Dorsolateral prefrontal cortex (tissue), 120 donors: ENCODE measurements at regions of chr4 and their contacts with region 1.

Region 1: GRCh38 chr4:53558065-53558801 is 33.1 kb downstream of the LNX1 start:
- DNase-seq: peak; percentile 31 to 90 (median 83)
- H3K4me3 ChIP-seq: peak overlapping the region in 58 of 59 donors; percentile 27 to 73 (median 54)
- H3K27ac ChIP-seq: peak overlapping the region in 52 of 59 donors; percentile 7 to 87 (median 74)
- H3K27me3 ChIP-seq: no peaks in the 10 kb centered on the region
- CTCF ChIP-seq: no peak

Region 2: GRCh38 chr4:52915730-52916300 is 642.4 kb before region 1 on chr4:
- intact Hi-C with region 1: no loop called
- DNase-seq: no peak
- H3K4me3 ChIP-seq: no peak overlapping the region
- H3K27ac ChIP-seq: peak overlapping the region in 1 of 59 donors; percentile 32
- H3K27me3 ChIP-seq: no peaks in the 10 kb centered on the region
- CTCF ChIP-seq: no peak

Region 3: DNA sequence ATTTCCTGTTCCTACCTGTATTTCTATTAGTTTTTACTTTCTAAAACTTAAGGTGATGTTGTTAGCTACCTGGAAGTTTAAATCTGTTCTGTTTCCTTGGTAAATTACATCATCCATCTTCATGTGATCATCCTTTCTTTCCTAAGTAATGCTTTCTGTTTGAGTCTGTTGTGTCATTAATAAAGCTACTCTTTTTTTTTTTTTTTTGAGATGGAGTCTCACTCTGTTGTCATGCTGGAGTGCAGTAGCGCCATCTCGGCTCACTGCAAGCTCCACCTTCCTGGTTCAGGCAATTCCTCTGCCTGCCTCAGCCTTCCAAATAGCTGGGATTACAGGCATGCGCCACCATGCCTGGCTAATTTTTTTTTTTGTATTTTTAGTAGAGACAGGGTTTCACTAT is 107.5 kb before region 1 on chr4:
- intact Hi-C with region 1: no loop called
- DNase-seq: no peak
- H3K4me3 ChIP-seq: no peak overlapping the region
- H3K27ac ChIP-seq: no peak overlapping the region
- H3K27me3 ChIP-seq: no peaks in the 10 kb centered on the region
- CTCF ChIP-seq: no peak

Region 4: DNA sequence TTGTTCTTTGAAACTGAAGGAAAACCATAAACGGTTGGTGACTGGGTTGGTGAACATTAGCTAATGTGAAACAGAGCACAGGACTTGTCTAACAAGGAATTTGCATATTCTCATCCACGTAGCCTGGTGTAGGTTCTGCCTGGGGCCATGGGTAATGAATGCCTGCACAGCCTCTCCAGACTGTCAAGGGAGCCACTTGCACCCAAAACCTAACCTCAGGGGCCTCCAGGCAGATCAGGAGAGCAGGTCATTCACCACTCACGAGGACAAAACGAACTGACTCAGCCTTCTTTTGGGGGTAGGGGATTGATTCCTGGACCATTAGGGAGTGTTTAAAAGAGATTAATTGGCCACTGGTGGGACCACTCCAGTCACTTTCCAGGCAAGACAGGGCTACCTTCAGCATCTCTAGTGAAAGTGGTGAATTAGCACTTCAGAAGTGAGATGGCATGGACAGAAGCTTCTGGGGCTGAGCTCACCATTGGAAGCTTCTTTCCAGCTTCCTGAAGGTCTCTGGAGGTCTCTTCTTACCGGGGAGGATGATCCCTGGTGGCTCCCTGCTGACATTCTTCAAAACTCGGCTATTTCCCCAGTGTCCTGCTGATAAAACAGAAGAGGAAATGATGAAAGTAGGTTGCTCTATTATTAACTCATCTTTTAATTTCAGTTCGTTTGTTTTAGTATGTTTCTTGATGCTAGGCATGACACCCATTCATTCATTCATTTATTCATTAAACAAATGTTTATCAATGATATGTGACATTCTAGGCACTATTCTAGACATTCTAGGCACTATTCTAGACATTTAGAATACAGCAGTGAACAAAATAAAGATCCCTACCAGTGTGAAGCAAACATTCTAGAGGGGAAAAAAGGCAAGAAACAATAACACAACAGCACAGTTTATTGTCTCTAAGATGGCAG is 137.6 kb after region 1 on chr4:
- intact Hi-C with region 1: loop called in 1 of 2 experiments (anchors 5 kb)
- DNase-seq: no peak
- H3K4me3 ChIP-seq: no peak overlapping the region
- H3K27ac ChIP-seq: peak overlapping the region in 3 of 59 donors; percentile 22 to 38 (median 32)
- H3K27me3 ChIP-seq: peaks cover 0 to 8% (median 0%) of the 10 kb centered on the region in 45 donors
- CTCF ChIP-seq: no peak

Region 5: GRCh38 chr4:53899586-53900270 is 341.5 kb after region 1 on chr4:
- intact Hi-C with region 1: no loop called
- DNase-seq: no peak
- H3K4me3 ChIP-seq: no peak overlapping the region
- H3K27ac ChIP-seq: no peak overlapping the region
- H3K27me3 ChIP-seq: peaks cover 0 to 26% (median 0%) of the 10 kb centered on the region in 45 donors
- CTCF ChIP-seq: no peak